ENCODE measurements at regions of chr14 and their contacts with region 1.

Region 1: DNA sequence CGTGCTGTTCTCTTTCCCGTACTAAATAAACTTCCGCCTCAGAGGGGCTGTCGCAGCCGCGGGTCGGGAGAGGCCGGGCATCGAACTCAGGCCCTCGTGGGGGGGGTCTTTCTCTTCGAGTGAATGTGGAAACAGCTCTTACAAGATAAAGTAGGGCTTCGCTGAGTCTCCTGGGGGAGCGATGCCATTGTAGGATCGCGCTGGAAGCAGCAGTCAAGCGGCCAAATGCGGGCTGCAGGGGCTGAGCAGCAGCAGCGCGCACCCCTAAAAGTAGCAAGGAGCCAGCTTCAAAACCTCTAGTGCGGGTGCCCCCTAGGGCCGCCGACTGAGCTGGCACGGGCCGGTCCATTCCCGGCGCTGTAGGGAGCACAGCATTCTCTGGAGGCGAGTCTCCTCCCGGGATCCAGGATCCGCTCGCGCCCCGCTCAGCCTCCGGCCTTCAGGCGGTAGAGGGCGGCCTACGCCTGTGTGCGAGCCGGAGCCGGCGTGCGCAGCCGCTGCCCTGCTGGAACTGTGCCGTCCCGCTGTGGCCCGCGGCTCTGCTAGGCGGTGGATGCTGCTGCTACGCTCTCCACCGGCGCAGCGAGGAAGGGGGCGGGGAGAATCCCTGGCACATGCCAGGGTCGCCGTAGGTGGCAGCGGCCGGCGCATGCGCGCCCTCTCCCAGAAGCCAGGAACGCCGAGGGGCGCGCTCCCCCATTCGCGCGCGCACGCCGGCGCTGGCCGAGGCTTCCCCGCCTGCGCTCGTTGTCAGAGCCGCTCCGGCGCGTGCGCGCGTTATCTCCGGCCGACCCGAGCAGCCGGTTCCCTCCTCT is at the start of gene FUT8:
- DNase-seq: peak; percentile 86
- H3K4me3 ChIP-seq: peak within 1 kb of the TSS; percentile 81
- H3K27ac ChIP-seq: peak within 1 kb of the TSS; percentile 53
- H3K27me3 ChIP-seq: no peaks in the 10 kb centered on the region
- CTCF ChIP-seq: peak; percentile 67

Region 2: DNA sequence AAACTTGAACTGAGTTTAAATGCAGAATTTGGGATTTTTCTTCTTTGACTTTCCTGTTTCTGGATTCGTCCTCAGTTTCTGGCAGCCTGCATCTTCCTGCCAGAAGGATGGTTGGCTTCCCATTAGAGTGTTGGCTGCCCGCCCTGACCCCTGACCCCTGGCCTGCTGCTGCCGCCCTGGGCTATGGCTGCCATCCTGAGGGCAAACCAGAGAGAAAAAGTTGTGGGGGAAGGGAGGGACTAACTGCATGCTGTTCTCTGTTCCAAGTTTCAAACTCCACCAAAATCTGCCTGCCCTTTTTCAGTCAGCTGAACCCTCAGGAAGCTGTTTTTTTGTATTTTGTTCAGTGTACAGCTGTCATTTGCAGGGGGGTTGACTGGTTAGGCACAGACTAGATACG is 377.2 kb before region 1 on chr14:
- in situ Hi-C with region 1: no loop called
- DNase-seq: no peak
- H3K4me3 ChIP-seq: no peak overlapping the region
- H3K27ac ChIP-seq: no peak overlapping the region
- H3K27me3 ChIP-seq: no peaks in the 10 kb centered on the region
- CTCF ChIP-seq: no peak

Region 3: GRCh38 chr14:65164068-65164824 is 248.0 kb before region 1 on chr14:
- in situ Hi-C with region 1: no loop called
- DNase-seq: peak; percentile 33
- H3K4me3 ChIP-seq: no peak overlapping the region
- H3K27ac ChIP-seq: no peak overlapping the region
- H3K27me3 ChIP-seq: no peaks in the 10 kb centered on the region
- CTCF ChIP-seq: peak; percentile 64

Region 4: DNA sequence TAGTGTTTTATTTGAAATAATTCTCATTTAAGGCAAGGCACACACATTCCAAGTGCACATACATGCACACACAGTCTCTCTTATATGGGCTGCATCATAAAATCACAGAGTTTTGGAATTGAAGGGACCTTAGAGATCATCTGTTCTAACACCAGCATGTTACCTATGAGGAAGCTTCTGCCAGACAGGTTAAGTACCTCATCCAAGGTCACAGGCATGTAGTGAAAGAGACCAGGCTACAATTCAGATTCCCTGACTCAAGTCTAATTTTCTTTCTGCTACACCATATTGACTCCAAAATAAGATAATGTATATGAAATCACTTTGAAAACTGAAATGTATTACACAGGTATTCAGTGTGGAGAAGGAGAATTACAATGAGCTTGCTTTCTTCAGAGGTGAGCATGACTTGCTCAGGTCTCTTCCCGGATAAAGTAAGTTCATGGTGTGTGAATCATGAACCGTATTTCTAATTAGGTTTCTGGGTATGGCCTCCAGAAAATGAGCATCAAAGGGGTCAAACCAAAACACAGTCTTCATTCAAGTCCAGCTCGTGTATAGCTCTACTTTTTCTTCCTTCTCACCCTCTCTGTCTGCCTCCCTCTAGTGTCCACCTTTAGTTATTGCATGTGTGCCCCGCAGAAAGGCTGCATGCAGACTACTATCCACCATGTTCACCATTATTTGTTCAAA is 412.2 kb after region 1 on chr14:
- in situ Hi-C with region 1: loop called (anchors 25 kb)
- DNase-seq: peak; percentile 39
- H3K4me3 ChIP-seq: no peak overlapping the region
- H3K27ac ChIP-seq: no peak overlapping the region
- H3K27me3 ChIP-seq: peaks cover 2% of the 10 kb centered on the region
- CTCF ChIP-seq: peak; percentile 93